CD4-positive, alpha-beta memory T cell (primary cell): ENCODE measurements at regions of chr11 and their contacts with region 1.

Region 1: DNA sequence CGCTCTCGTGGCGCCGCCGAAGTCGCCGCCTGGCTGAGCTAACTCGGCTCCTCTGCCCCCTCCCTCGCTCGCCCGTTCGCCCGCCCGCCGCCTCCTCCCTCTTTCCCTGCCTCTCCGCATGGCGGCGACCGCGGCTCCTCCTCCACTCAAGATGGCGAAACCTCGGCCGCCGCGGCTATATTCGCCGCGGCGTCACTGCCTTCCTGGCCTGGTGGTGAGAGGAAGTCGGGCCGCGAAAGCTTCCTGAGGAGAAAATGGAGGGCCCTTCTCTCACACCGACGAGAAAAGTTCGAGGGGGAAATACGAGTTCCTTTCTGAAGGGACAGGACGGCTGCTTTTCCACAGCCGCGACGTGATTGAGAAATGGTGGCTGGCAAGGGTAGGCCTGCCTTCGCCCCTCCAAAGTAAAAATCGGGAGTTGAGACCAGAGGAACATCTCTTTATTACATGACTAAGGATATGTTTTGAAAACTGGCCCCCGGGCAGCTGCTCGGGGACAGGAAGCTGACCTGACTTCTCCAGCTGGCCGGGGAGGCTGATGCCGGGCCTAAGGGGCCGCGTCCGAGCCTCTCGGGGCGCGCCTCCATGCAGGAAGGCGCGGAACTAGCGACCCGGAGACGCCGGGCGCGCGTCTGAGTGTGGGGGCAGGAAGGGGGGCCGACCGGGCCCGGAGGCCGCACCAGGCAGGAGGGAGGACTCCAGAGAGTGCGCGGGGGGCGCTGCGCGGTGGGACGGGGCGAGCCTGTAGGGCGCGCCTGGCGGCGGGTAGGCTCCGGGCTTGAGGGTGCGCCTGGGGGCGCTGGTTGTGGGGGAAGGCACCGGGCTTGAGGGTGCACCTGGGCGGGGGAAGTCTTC is at the start of gene DDX6:
- DNase-seq: peak; percentile 89 to 92 (median 91)
- H3K4me3 ChIP-seq: peak within 1 kb of the TSS; percentile 68 to 98
- H3K4me3 Mint-ChIP-seq: peak within 1 kb of the TSS; percentile 95 to 100 (median 99)
- H3K27ac ChIP-seq: peak within 1 kb of the TSS; percentile 99
- H3K27ac Mint-ChIP-seq: peak within 1 kb of the TSS; percentile 98 to 100 (median 99)
- H3K4me1 ChIP-seq: peaks cover 30% of the 10 kb centered on the region
- H3K4me1 Mint-ChIP-seq: peaks cover 9 to 54% (median 18%) of the 10 kb centered on the region in 4 donors
- H3K27me3 ChIP-seq: no peaks in the 10 kb centered on the region
- H3K27me3 Mint-ChIP-seq: no peaks in the 10 kb centered on the region
- total RNA-seq, gene DDX6: 299 to 304 TPM

Region 2: GRCh38 chr11:118572061-118572980 is 219.0 kb before region 1 on chr11 and contains the start of gene ARCN1:
- CTCF ChIA-PET with region 1: interaction called, 3 read pairs
- POLR2A ChIA-PET with region 1: interaction called, 11 read pairs
- intact Hi-C with region 1: no loop called
- DNase-seq: peak; percentile 79 to 87 (median 81)
- H3K4me3 ChIP-seq: peak within 1 kb of the TSS; percentile 79 to 93
- H3K4me3 Mint-ChIP-seq: peak within 1 kb of the TSS; percentile 92 to 99 (median 98)
- H3K27ac ChIP-seq: peak within 1 kb of the TSS; percentile 100
- H3K27ac Mint-ChIP-seq: peak within 1 kb of the TSS; percentile 94 to 99 (median 98)
- H3K4me1 ChIP-seq: peaks cover 50% of the 10 kb centered on the region
- H3K4me1 Mint-ChIP-seq: peaks cover 32 to 54% (median 44%) of the 10 kb centered on the region in 4 donors
- H3K27me3 ChIP-seq: no peaks in the 10 kb centered on the region
- H3K27me3 Mint-ChIP-seq: no peaks in the 10 kb centered on the region
- total RNA-seq, gene ARCN1: 133 to 134 TPM

Region 3: DNA sequence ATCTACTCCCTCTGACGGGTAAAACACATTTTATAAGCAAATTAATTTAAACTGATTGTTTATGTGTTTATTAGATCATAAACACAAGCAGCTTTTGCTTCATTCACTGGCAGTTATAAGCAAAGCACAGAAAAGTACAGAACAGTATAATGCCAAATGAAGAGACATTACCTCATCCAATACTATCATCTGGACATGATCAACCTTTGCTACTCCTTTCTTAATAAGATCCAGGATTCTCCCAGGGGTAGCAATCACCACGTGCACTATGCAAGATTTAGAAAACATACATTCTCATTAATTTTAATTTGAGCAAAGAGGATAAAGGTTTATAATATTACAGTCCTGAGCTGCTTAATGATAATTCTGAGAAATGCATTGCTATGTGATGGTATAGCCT is 28.3 kb before region 1 on chr11:
- CTCF ChIA-PET with region 1: interaction called, 43 read pairs
- POLR2A ChIA-PET with region 1: interaction called, 87 read pairs
- intact Hi-C with region 1: no loop called
- DNase-seq: no peak
- H3K4me3 ChIP-seq: no peak overlapping the region
- H3K4me3 Mint-ChIP-seq: no peak overlapping the region
- H3K27ac ChIP-seq: no peak overlapping the region
- H3K27ac Mint-ChIP-seq: peak overlapping the region in 1 of 7 donors; percentile 60
- H3K4me1 ChIP-seq: peaks cover 8% of the 10 kb centered on the region
- H3K4me1 Mint-ChIP-seq: peaks cover 9 to 30% (median 19%) of the 10 kb centered on the region in 4 donors
- H3K27me3 ChIP-seq: no peaks in the 10 kb centered on the region
- H3K27me3 Mint-ChIP-seq: no peaks in the 10 kb centered on the region

Region 4: GRCh38 chr11:118859973-118860372 is 68.6 kb after region 1 on chr11:
- CTCF ChIA-PET with region 1: interaction called, 3 read pairs
- POLR2A ChIA-PET with region 1: interaction called, 336 read pairs
- intact Hi-C with region 1: no loop called
- DNase-seq: no peak
- H3K4me3 ChIP-seq: no peak overlapping the region
- H3K4me3 Mint-ChIP-seq: no peak overlapping the region
- H3K27ac ChIP-seq: no peak overlapping the region
- H3K27ac Mint-ChIP-seq: no peak overlapping the region
- H3K4me1 ChIP-seq: no peaks in the 10 kb centered on the region
- H3K4me1 Mint-ChIP-seq: peaks cover 3 to 12% (median 7%) of the 10 kb centered on the region in 4 donors
- H3K27me3 ChIP-seq: no peaks in the 10 kb centered on the region
- H3K27me3 Mint-ChIP-seq: no peaks in the 10 kb centered on the region

Region 5: DNA sequence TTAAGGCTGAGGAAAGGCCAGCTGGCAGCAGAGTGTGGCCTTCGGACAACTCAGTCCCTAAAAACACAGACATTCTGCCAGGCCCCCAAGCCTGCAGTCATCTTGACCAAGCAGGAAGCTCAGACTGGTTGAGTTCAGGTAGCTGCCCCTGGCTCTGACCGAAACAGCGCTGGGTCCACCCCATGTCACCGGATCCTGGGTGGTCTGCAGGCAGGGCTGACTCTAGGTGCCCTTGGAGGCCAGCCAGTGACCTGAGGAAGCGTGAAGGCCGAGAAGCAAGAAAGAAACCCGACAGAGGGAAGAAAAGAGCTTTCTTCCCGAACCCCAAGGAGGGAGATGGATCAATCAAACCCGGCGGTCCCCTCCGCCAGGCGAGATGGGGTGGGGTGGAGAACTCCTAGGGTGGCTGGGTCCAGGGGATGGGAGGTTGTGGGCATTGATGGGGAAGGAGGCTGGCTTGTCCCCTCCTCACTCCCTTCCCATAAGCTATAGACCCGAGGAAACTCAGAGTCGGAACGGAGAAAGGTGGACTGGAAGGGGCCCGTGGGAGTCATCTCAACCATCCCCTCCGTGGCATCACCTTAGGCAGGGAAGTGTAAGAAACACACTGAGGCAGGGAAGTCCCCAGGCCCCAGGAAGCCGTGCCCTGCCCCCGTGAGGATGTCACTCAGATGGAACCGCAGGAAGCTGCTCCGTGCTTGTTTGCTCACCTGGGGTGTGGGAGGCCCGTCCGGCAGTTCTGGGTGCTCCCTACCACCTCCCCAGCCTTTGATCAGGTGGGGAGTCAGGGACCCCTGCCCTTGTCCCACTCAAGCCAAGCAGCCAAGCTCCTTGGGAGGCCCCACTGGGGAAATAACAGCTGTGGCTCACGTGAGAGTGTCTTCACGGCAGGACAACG is 104.1 kb after region 1 on chr11:
- CTCF ChIA-PET with region 1: interaction called, 118 read pairs
- POLR2A ChIA-PET with region 1: interaction called, 3 read pairs
- intact Hi-C with region 1: loop called (anchors 1 kb)
- DNase-seq: peak; percentile 80 to 91 (median 82)
- H3K4me3 ChIP-seq: peak overlapping the region; percentile 17 to 37
- H3K4me3 Mint-ChIP-seq: peak overlapping the region; percentile 68 to 87 (median 76)
- H3K27ac ChIP-seq: peak overlapping the region; percentile 84
- H3K27ac Mint-ChIP-seq: peak overlapping the region; percentile 93 to 98 (median 97)
- H3K4me1 ChIP-seq: peaks cover 83% of the 10 kb centered on the region
- H3K4me1 Mint-ChIP-seq: peaks cover 58 to 82% (median 70%) of the 10 kb centered on the region in 4 donors
- H3K27me3 ChIP-seq: no peaks in the 10 kb centered on the region
- H3K27me3 Mint-ChIP-seq: no peaks in the 10 kb centered on the region

Region 6: DNA sequence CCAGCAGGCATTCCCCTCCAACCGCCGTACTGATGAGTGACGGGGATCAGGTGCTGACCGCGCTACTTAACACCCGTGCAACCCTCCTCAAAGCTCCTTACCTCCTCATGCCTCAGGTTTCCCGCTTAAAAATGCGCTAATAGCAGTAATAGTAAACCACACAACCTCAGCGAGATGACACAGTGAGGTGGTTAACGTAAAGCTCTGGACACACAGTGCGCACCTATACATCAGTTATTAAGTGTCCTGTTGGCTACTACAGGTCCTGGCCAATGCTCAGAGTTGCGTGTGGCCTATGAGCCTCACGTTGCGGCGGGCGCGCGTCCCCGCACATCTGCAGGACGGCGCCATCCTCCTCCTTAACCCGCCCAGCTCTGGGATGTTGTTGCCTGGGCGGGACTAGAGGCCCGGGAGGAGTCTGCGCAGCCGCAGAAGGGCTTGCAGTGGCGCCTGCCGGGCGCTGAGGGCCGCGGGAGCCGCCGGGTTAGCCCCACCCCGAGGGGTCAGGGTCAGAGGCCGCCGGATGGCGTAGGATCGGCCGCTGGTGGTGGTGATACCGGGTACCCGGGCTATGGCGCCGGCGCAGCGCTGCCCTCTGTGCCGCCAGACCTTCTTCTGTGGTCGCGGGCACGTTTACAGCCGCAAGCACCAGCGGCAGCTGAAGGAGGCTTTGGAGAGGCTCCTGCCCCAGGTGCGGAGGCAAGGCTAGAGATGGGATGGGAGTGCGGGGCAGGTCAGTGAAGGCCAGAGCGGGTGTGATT is 206.5 kb after region 1 on chr11 and contains the start of gene CENATAC:
- CTCF ChIA-PET with region 1: interaction called, 5 read pairs
- POLR2A ChIA-PET with region 1: interaction called, 35 read pairs
- intact Hi-C with region 1: no loop called
- DNase-seq: peak; percentile 94 to 96 (median 95)
- H3K4me3 ChIP-seq: peak within 1 kb of the TSS; percentile 87 to 99
- H3K4me3 Mint-ChIP-seq: peak within 1 kb of the TSS; percentile 87 to 99 (median 98)
- H3K27ac ChIP-seq: peak within 1 kb of the TSS; percentile 75
- H3K27ac Mint-ChIP-seq: peak within 1 kb of the TSS; percentile 90 to 99 (median 95)
- H3K4me1 ChIP-seq: peaks cover 24% of the 10 kb centered on the region
- H3K4me1 Mint-ChIP-seq: peaks cover 18 to 52% (median 34%) of the 10 kb centered on the region in 4 donors
- H3K27me3 ChIP-seq: no peaks in the 10 kb centered on the region
- H3K27me3 Mint-ChIP-seq: no peaks in the 10 kb centered on the region
- total RNA-seq, gene CENATAC: 109 to 114 TPM